Activated naive CD4-positive, alpha-beta T cell treated with anti-CD3 and anti-CD28 coated beads for 36 hours (primary cell): ENCODE measurements at regions of chr6 and their contacts with region 1.

Region 1: DNA sequence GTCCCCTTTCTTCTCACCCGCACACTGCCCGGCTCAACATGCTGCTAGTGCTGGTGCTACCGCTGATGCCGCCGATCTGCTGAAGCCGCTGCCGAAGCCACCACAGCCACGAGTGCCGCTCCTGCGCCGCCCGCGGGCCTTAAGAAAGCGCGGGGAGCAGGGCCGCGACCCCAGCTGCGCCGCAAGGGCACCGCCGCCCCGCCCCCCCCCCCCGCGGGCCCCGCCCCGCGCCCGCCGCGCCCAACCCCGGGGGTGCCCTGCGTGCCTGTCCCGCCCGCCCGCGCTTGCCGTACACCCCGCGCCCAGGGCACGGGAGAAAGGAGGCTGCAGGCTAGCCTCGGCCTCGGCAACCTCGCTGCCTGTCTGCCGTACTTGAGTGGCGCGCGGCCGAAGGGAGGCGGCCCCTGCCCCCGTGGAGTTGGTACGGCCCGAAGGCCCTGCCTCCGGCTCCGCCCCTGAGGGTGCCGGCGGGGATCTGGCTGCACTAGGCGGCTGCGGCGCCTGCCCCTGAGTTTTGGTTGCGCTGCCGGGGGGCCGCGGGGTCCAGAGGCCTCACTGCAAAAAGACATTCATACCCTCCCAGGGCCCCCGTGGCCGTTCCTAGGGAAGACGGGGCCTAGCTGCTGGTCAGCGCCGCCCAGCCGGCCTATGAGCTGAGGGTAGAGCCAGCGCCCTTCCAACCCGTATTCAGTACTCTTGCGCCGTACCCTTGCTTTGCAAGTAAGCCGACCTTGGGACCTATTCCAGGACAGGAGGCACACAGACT is at the start of gene SOD2:
- DNase-seq: peak; percentile 84
- H3K4me3 Mint-ChIP-seq: peak within 1 kb of the TSS; percentile 95
- H3K27ac Mint-ChIP-seq: peak within 1 kb of the TSS; percentile 96
- H3K4me1 Mint-ChIP-seq: peaks cover 35% of the 10 kb centered on the region
- H3K27me3 Mint-ChIP-seq: no peaks in the 10 kb centered on the region
- total RNA-seq, gene SOD2: 256 to 260 TPM

Region 2: GRCh38 chr6:158644231-158645063 is 1048.9 kb before region 1 on chr6 and contains the start of gene DYNLT1:
- CTCF ChIA-PET with region 1: no interaction called
- intact Hi-C with region 1: loop called (anchors 5 kb)
- DNase-seq: peak; percentile 91
- H3K4me3 Mint-ChIP-seq: peak within 1 kb of the TSS; percentile 97
- H3K27ac Mint-ChIP-seq: peak within 1 kb of the TSS; percentile 99
- H3K4me1 Mint-ChIP-seq: peaks cover 76% of the 10 kb centered on the region
- H3K27me3 Mint-ChIP-seq: no peaks in the 10 kb centered on the region
- total RNA-seq, gene DYNLT1: 99.1 to 107 TPM

Region 3: DNA sequence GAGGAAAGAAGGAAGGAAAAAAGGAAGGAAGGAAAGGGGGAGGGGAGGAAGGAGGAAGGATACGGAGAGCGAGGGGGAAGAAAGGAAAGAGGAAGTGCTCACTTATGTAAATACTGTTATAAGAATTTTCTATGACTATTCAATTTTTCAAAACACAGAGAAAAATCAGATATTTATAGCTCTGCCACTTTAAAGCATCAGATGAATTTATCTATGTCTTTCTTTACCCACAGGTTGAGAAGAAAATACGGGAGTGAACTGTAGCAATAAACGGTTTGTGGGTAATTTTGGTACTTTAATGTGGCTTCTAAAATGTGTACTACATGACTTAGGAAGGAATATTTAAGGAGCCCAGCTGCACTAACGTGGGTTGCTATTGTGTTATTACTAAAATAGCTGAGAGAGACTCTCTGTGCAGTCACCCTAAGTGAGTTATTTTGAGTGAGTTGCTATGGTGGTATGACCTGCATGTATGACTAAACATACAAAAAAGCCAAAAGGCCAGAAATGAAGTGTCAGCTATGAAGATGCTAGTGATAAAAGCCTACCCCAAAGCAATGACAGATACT is 225.8 kb before region 1 on chr6:
- CTCF ChIA-PET with region 1: no interaction called
- intact Hi-C with region 1: no loop called
- DNase-seq: no peak
- H3K4me3 Mint-ChIP-seq: no peak overlapping the region
- H3K27ac Mint-ChIP-seq: no peak overlapping the region
- H3K4me1 Mint-ChIP-seq: peaks cover 2% of the 10 kb centered on the region
- H3K27me3 Mint-ChIP-seq: peaks cover 14% of the 10 kb centered on the region

Region 4: GRCh38 chr6:159720708-159721107 is 27.4 kb after region 1 on chr6:
- CTCF ChIA-PET with region 1: interaction called, 12 read pairs
- intact Hi-C with region 1: no loop called
- DNase-seq: peak; percentile 67
- H3K4me3 Mint-ChIP-seq: no peak overlapping the region
- H3K27ac Mint-ChIP-seq: no peak overlapping the region
- H3K4me1 Mint-ChIP-seq: peaks cover 37% of the 10 kb centered on the region
- H3K27me3 Mint-ChIP-seq: no peaks in the 10 kb centered on the region

Region 5: DNA sequence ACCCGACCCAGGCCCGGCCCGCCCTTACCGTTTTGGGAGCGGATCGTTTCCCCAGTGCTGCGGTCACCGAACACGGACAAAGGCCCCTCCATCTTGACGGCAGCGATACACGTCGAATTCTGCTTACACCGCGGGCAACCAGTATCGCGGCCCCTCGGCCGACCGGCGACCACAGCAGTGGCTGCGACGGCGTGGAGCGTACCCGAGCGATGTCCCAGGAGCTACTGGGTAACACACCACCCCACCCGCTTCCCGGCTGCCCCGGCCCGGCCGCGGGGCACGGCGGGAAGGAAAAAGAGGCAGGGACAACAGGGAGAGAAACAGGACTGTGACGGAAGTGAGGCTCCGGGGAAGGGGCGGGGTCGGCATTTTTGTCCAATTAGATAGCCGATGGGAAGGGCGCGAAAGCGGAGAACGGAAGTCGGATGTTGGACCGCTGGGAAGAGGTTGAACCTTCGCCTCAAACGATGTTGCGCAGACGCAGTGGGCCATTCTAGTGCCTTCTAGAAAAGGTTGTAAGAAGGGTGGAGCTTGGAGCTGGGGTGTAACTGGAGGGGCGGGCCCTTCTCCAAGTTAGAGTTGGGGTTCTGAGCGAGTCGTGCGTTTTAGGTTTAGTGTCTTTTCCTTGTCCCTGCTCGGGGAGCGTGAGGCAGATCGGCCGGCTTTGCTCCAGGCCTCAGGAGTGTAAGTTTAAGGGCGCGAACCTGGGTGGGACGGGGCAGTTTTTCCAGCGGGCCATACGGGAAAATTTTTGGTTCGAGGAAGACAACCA is 96.3 kb after region 1 on chr6 and contains the start of gene TCP1:
- CTCF ChIA-PET with region 1: interaction called, 25 read pairs
- intact Hi-C with region 1: loop called (anchors 1 kb)
- DNase-seq: peak; percentile 100
- H3K4me3 Mint-ChIP-seq: peak within 1 kb of the TSS; percentile 99
- H3K27ac Mint-ChIP-seq: peak within 1 kb of the TSS; percentile 98
- H3K4me1 Mint-ChIP-seq: peaks cover 66% of the 10 kb centered on the region
- H3K27me3 Mint-ChIP-seq: no peaks in the 10 kb centered on the region
- total RNA-seq, gene TCP1: 420 to 425 TPM

Region 6: DNA sequence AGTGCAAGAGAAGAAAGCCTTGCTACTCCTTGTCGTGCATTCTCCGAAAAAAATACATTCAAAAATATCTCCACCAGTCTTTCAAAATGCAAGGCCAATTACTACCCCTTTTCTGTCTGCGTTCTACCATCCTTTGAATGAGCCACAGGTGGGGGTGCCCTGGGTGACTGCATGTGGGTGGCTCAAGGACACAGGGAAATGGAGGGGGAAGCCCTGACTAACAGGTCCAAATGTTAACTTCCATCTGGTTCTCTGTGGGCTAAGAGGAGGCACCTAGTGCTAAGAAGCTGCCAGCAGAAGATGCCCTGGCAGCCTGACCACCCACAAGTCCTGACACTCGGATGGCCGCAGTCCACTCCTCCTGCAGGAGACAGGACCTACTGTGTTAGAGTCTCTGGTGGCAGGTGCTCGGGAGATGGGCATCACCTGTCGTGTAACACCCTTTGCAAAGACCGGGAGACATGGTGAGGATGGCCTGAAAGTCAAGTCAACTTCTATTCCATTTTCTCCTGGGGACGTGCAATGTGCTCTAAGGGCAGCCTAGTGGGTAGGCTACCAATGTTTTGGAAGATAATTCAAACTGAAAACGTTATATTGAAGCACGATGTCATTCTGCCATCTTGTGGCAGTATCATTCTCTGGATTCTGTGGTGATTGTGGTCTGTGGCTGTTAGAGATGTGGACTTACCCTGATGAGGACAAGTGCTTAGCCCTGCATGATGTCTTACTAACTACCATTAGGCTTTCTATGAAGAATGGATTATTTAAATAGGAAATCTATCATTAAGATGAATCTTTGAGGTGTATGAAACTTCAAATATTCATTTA is 248.2 kb after region 1 on chr6:
- CTCF ChIA-PET with region 1: interaction called, 3 read pairs
- intact Hi-C with region 1: loop called (anchors 1 kb)
- DNase-seq: peak; percentile 55
- H3K4me3 Mint-ChIP-seq: no peak overlapping the region
- H3K27ac Mint-ChIP-seq: no peak overlapping the region
- H3K4me1 Mint-ChIP-seq: peaks cover 5% of the 10 kb centered on the region
- H3K27me3 Mint-ChIP-seq: peaks cover under 1% of the 10 kb centered on the region

Region 7: DNA sequence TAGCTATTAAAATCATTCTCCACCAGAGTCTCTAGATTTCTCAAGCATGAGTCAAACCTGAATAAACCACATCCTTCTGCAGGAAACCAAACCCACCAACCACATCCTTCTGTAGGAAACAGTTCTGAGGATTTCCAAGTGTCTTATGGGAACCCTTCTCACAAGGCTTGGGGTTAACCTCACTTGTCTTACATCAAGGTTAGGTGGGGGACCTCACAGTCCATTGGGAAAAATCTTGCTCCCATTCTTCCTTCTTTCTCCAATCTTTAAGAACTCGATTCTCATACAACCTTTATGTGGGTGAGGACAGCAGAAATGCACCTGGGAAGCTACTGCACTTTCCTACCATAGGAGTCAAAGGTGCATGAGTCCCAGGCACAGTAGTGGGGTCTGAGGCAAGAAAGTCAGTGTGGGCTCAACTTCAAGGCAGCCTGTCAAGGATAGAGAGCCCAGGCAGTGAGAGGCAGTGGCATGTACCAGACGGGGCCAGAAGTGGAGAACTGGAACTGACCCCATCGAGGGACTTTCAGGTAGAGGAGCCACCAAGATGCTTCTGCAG is 769.3 kb after region 1 on chr6:
- CTCF ChIA-PET with region 1: no interaction called
- intact Hi-C with region 1: loop called (anchors 5 kb)
- DNase-seq: peak; percentile 79
- H3K4me3 Mint-ChIP-seq: no peak overlapping the region
- H3K27ac Mint-ChIP-seq: peak overlapping the region; percentile 50
- H3K4me1 Mint-ChIP-seq: peaks cover 53% of the 10 kb centered on the region
- H3K27me3 Mint-ChIP-seq: peaks cover 3% of the 10 kb centered on the region